ENCODE measurements at regions of chr1 and their contacts with region 1.

Region 1: GRCh38 chr1:201877877-201878401 is 10.8 kb upstream of the SHISA4 start:
- DNase-seq: no peak
- ATAC-seq: peak; percentile 78

Region 2: GRCh38 chr1:201970334-201971159 is 92.6 kb after region 1 on chr1:
- intact Hi-C with region 1: loop called (anchors 5 kb)
- DNase-seq: no peak
- ATAC-seq: no peak

Measured in Right ventricle myocardium superior (tissue), 1 donor.